ENCODE measurements at regions of chr20 and their contacts with region 1.

Region 1: GRCh38 chr20:22339091-22339881 is 245.1 kb downstream of the FOXA2 start:
- DNase-seq: peak; percentile 81
- H3K4me3 Mint-ChIP-seq: no peak overlapping the region
- H3K27ac Mint-ChIP-seq: no peak overlapping the region
- H3K4me1 Mint-ChIP-seq: no peaks in the 10 kb centered on the region
- H3K27me3 Mint-ChIP-seq: peaks cover 7% of the 10 kb centered on the region

Region 2: DNA sequence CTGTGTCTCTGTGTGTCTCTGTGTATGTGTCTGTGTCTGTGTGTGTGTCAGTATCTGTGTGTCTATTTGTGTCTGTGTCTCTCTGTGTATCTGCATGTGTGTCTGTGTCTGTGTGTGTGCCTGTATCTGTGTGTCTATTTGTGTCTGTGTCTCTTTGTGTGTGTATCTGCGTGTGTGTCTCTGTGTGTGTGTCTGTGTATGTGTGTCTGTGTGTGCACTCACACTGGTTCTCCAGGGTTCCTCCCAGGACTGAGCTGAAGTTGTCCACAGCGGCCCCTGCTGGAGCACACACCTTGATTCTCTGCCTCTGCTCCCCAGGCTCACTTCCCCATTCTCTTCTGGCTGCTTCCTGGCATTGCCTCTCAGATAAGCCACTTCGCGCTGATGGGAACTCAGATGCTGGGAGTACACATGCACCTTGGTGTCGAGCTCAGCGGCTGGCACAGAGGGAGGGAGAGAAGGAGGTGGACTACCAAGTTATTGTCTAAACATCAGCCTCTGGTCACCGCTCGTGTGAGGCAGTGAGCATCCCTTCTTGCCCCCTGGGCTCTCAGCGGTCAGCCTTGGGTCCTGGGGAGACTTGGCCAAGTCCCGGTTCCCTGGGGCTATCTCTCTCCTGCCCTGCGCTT is 906.4 kb after region 1 on chr20:
- intact Hi-C with region 1: loop called (anchors 5 kb)
- DNase-seq: peak; percentile 75
- H3K4me3 Mint-ChIP-seq: no peak overlapping the region
- H3K27ac Mint-ChIP-seq: no peak overlapping the region
- H3K4me1 Mint-ChIP-seq: no peaks in the 10 kb centered on the region
- H3K27me3 Mint-ChIP-seq: peaks cover 2% of the 10 kb centered on the region